ENCODE measurements at regions of chr5 and their contacts with region 1.

Region 1: DNA sequence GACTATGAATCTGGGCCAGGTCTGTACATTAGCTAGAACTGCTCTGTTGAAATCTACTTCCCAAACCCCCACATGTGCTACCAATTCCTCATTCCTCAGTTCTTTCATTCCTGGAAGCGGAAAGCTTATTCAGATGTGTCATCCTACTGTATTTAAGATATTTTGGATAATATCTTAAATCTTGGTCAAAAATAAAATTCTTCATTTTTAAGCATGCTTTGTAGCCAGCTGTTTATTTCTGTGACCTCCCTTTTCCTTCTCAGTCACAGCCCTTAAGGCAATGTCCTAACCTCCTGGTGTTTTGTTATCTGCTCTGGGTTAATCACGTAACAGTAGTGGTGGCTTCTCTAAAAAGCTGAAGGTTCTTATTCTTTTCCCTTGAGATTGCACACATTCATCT is 35.6 kb downstream of the GLRX start:
- DNase-seq: no peak
- H3K4me3 ChIP-seq: no peak overlapping the region
- CTCF ChIP-seq: no peak
- POLR2A ChIP-seq: no peak

Region 2: GRCh38 chr5:95081500-95081960 is 705.4 kb before region 1 on chr5:
- intact Hi-C with region 1: no loop called
- DNase-seq: peak; percentile 39 to 90
- H3K4me3 ChIP-seq: no peak overlapping the region
- CTCF ChIP-seq: no peak
- POLR2A ChIP-seq: peak in 1 of 2 donors; percentile 11

Region 3: DNA sequence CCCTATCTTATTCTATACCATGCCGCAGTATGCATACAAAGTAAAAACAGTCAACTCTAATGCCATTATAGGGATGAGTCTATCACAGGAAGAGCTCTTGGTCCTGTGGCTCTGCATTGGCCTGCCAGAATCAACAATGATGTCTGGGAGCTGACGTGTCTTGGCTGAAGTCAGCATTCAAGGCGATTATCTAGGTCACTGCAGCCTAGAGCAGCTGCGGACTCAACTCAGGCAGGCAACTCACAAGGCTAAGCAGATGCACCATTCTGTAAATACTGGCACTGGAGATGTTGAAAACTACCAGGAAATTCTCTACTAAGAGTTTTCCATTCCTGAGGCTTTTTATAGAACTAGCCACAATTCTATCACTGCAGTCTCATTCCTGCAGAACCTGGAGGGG is 117.4 kb before region 1 on chr5:
- intact Hi-C with region 1: no loop called
- DNase-seq: peak in 1 of 2 donors; percentile 38
- H3K4me3 ChIP-seq: no peak overlapping the region
- CTCF ChIP-seq: no peak
- POLR2A ChIP-seq: no peak

Region 4: DNA sequence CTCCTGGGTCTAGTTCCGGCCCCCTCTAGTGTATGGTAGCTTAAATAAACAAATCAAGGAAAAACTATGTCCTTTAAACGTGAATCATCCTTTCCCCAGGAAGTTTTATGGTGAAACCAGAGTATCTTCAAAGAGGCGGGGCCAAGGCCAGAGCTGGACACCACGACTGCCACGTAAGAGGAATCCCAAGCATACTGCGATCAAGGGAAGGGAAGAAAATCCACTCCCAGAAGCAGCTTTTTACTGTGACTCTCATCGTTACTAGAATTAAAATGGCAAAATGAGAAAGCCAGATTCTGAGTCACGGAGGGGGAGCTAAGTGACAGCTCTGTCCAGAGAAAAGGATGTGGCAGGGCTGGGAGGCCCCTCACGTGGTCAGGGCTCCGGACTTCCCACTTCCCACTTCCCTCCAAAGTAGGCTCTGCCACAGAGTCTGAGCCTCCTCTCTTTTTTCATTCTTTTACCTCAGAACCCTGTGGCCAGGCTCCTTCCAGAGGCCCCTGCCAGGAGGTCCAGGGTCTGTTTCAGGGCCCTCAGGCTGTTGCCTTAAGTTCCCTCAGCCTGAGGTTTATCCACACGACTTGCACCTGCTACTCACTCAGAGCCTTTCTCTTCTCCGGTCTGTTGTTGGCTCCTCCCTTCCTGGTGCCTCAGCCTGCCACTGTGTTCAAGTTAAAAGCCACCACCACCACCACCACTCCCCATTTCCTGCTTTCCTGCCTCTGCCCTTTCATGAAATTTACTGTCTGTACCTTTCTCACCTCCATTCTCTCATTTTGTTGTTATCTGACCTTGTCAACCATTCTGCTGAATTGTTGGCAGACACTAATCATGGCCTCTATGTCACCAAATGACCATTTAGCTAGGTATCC is 37.1 kb after region 1 on chr5:
- intact Hi-C with region 1: no loop called
- DNase-seq: peak; percentile 72 to 94
- H3K4me3 ChIP-seq: no peak overlapping the region
- CTCF ChIP-seq: no peak
- POLR2A ChIP-seq: peak in 1 of 2 donors; percentile 23

Region 5: DNA sequence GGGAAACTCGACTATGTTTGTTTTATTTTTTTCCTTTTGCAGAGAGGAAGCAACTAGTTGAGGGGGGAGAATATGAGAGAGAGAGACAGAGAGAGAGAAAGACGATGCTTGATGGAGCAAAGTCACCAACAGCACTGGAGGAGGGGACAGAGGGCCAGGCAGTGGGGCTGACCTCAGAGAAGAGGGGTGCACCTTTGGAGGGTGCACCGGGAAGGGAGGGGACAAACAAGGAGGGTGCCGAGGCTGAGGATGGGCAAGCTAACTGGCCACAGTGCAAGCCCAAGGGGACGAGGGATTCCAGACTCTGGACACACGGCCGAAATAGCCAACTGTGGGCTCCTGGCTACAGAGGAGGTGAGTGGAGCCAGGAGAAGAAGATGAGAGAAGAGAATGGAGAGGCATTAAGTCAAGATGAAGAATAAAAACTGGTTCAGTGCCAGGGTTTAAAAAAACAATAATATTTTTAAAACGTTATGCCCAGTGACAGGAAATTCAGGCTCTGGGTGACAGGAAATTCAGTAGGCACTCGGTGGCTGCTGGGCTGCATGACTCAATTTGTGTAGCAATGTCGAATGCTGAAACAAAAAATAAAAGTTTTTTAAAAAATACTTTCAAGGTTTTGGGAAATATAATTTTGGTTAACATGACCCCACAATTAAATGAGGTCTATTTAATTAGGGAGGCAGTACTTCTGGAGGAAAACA is 48.9 kb after region 1 on chr5:
- intact Hi-C with region 1: loop called (anchors 5 kb)
- DNase-seq: peak in 1 of 2 donors; percentile 87
- H3K4me3 ChIP-seq: no peak overlapping the region
- CTCF ChIP-seq: no peak
- POLR2A ChIP-seq: no peak

Region 6: GRCh38 chr5:97618721-97619120 is 1831.8 kb after region 1 on chr5:
- intact Hi-C with region 1: no loop called
- DNase-seq: no peak
- H3K4me3 ChIP-seq: no peak overlapping the region
- CTCF ChIP-seq: no peak
- POLR2A ChIP-seq: no peak

Measured in lower leg skin (tissue), 4 donors.